Transverse colon (tissue), 4 donors: ENCODE measurements at regions of chr4 and their contacts with region 1.

Region 1: DNA sequence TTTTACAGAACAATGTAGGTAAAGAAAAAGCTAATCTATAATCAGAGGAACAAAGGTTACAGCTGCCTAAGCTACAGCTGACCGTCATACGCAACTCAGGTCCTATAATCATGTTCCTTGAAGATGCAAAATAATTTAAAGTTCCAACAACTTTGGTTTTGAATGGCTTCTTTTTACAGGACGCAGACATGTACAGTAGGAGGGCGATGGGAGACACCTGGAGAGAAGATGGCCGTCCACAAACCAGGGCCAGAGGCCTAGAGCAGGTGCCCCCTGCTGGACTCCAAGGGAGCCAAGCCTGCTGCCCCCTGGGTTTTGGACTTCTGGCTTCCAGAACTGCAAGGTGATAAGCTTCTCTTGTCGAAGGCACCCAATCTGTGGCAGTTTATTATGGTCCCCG is 10.6 kb downstream of the HGFAC start:
- DNase-seq: no peak
- H3K4me3 ChIP-seq: no peak overlapping the region
- H3K27ac ChIP-seq: no peak overlapping the region
- H3K4me1 ChIP-seq: no peaks in the 10 kb centered on the region
- H3K27me3 ChIP-seq: no peaks in the 10 kb centered on the region
- CTCF ChIP-seq: peak in 1 of 5 experiments; percentile 15
- EP300 ChIP-seq: no peak
- POLR2A ChIP-seq: no peak

Region 2: GRCh38 chr4:3355266-3355748 is 97.1 kb before region 1 on chr4:
- in situ Hi-C with region 1: loop called in 1 of 4 experiments (anchors 10 kb)
- intact Hi-C with region 1: no loop called
- DNase-seq: no peak
- H3K4me3 ChIP-seq: no peak overlapping the region
- H3K27ac ChIP-seq: no peak overlapping the region
- H3K4me1 ChIP-seq: no peaks in the 10 kb centered on the region
- H3K27me3 ChIP-seq: no peaks in the 10 kb centered on the region
- CTCF ChIP-seq: no peak
- EP300 ChIP-seq: no peak
- POLR2A ChIP-seq: no peak

Region 3: DNA sequence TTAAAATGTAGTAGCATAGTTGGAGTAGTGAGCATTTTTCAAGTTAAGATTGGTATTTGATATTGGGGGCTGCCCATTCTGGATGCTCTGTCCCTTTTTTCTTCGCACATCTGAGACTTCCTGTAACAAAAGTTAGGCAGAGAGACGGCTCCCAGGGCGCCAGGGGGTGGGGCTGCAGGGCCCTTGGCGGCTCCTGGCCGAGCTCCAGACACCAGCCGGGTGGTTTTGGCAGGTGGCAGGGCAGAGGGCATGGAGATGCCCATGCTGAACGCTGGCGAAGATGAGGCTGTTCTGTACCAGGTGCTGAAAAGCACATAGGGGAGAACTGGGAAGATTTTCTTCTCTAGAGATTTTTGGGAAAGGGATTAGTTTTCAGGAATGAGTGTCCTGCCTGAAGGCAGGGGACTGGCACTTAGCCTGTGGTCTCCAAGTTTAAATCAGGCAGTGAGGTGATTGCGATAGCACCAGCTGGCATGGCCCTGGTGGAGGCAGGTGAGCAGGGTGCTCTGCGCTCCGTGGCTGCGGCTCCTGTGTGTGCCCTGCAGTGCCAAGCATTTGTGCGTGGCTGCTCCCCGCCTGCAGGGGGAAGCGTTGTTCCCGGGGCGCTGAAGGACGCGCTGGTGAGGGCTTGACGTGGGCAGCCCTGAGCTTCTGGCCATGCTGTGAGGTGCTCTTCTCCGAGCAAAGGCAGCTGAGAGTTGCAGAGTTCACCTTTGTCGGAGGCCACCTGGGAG is 34.2 kb before region 1 on chr4:
- in situ Hi-C with region 1: no loop called
- intact Hi-C with region 1: no loop called
- DNase-seq: no peak
- H3K4me3 ChIP-seq: no peak overlapping the region
- H3K27ac ChIP-seq: no peak overlapping the region
- H3K4me1 ChIP-seq: no peaks in the 10 kb centered on the region
- H3K27me3 ChIP-seq: no peaks in the 10 kb centered on the region
- CTCF ChIP-seq: no peak
- EP300 ChIP-seq: no peak
- POLR2A ChIP-seq: no peak

Region 4: GRCh38 chr4:5114950-5115349 is 1662.6 kb after region 1 on chr4:
- in situ Hi-C with region 1: no loop called
- intact Hi-C with region 1: loop called (anchors 5 kb)
- DNase-seq: no peak
- H3K4me3 ChIP-seq: no peak overlapping the region
- H3K27ac ChIP-seq: no peak overlapping the region
- H3K4me1 ChIP-seq: no peaks in the 10 kb centered on the region
- H3K27me3 ChIP-seq: no peaks in the 10 kb centered on the region
- CTCF ChIP-seq: no peak
- EP300 ChIP-seq: no peak
- POLR2A ChIP-seq: no peak